Activated B cell treated with CpG ODN at 0.5 μM for 24 hours (primary cell): ENCODE measurements at regions of chr22 and their contacts with region 1.

Region 1: GRCh38 chr22:30289134-30289979 is at the start of gene CASTOR1:
- DNase-seq: peak; percentile 90
- ATAC-seq: peak; percentile 85
- H3K4me3 Mint-ChIP-seq: peak within 1 kb of the TSS; percentile 88
- H3K27ac Mint-ChIP-seq: peak within 1 kb of the TSS; percentile 82
- H3K4me1 Mint-ChIP-seq: peaks cover 38% of the 10 kb centered on the region
- H3K27me3 Mint-ChIP-seq: no peaks in the 10 kb centered on the region
- CTCF ChIP-seq: no peak
- total RNA-seq, gene CASTOR1: 2.4 and 3.5 TPM in 2 replicates

Region 2: DNA sequence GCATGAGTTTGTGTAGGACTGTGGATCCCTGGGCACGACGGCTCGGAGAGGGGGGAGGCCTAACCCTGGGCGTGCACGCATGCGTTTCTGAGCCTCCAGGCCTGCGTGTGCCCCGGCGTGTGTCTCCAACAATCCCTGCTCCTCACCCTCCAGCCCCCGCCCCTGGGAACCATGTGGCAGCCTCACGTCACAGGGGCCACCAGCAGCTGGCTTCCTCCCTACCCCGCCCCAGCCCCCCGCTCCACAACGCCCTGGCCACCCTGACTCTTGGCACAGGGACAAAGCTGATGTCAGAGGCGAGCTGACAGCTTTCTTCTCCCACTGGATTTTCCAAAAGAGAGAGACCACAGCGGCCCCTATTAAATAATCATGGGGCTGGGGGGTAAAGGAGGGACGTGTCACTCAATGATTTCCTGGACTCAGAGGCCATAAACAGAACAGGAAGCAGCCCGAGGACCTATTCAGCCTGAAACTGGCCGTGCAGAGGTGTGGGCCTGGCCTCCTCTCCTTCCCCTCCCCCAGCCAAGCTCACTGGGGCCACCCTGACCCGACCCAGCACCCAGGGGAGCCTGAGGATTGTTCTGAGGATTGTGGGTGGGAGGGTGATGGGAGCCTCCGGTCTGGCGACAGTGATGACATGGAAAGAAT is 36.0 kb before region 1 on chr22:
- CTCF ChIA-PET with region 1: interaction called, 8 read pairs
- POLR2A ChIA-PET with region 1: no interaction called
- intact Hi-C with region 1: loop called (anchors 1 kb)
- DNase-seq: no peak
- ATAC-seq: no peak
- H3K4me3 Mint-ChIP-seq: no peak overlapping the region
- H3K27ac Mint-ChIP-seq: no peak overlapping the region
- H3K4me1 Mint-ChIP-seq: peaks cover 5% of the 10 kb centered on the region
- H3K27me3 Mint-ChIP-seq: peaks cover 17% of the 10 kb centered on the region
- CTCF ChIP-seq: no peak

Region 3: GRCh38 chr22:30305519-30305905 is 16.2 kb after region 1 on chr22:
- CTCF ChIA-PET with region 1: interaction called, 83 read pairs
- POLR2A ChIA-PET with region 1: interaction called, 131 read pairs
- intact Hi-C with region 1: loop called (anchors 1 kb)
- DNase-seq: no peak
- ATAC-seq: peak; percentile 61
- H3K4me3 Mint-ChIP-seq: peak overlapping the region; percentile 21
- H3K27ac Mint-ChIP-seq: peak overlapping the region; percentile 81
- H3K4me1 Mint-ChIP-seq: peaks cover 100% of the 10 kb centered on the region
- H3K27me3 Mint-ChIP-seq: no peaks in the 10 kb centered on the region
- CTCF ChIP-seq: no peak

Region 4: GRCh38 chr22:30326706-30327362 is 37.5 kb after region 1 on chr22 and contains the start of gene TBC1D10A:
- CTCF ChIA-PET with region 1: interaction called, 83 read pairs
- POLR2A ChIA-PET with region 1: interaction called, 92 read pairs
- intact Hi-C with region 1: loop called (anchors 1 kb)
- DNase-seq: peak; percentile 83
- ATAC-seq: peak; percentile 94
- H3K4me3 Mint-ChIP-seq: peak within 1 kb of the TSS; percentile 86
- H3K27ac Mint-ChIP-seq: peak within 1 kb of the TSS; percentile 82
- H3K4me1 Mint-ChIP-seq: peaks cover 45% of the 10 kb centered on the region
- H3K27me3 Mint-ChIP-seq: no peaks in the 10 kb centered on the region
- CTCF ChIP-seq: no peak
- total RNA-seq, gene TBC1D10A: 20.1 and 20.4 TPM in 2 replicates

Region 5: GRCh38 chr22:30356449-30357235 is 67.3 kb after region 1 on chr22 and contains the starts of genes CCDC157 and SF3A1:
- CTCF ChIA-PET with region 1: interaction called, 34 read pairs
- POLR2A ChIA-PET with region 1: interaction called, 68 read pairs
- intact Hi-C with region 1: loop called (anchors 1 kb)
- DNase-seq: peak; percentile 88
- ATAC-seq: peak; percentile 86
- H3K4me3 Mint-ChIP-seq: peak within 1 kb of the TSS; percentile 92
- H3K27ac Mint-ChIP-seq: peak within 1 kb of the TSS; percentile 76
- H3K4me1 Mint-ChIP-seq: peaks cover 43% of the 10 kb centered on the region
- H3K27me3 Mint-ChIP-seq: no peaks in the 10 kb centered on the region
- CTCF ChIP-seq: no peak
- total RNA-seq, gene CCDC157: 1.8 and 2.9 TPM in 2 replicates
- total RNA-seq, gene SF3A1: 263 and 269 TPM in 2 replicates

Region 6: DNA sequence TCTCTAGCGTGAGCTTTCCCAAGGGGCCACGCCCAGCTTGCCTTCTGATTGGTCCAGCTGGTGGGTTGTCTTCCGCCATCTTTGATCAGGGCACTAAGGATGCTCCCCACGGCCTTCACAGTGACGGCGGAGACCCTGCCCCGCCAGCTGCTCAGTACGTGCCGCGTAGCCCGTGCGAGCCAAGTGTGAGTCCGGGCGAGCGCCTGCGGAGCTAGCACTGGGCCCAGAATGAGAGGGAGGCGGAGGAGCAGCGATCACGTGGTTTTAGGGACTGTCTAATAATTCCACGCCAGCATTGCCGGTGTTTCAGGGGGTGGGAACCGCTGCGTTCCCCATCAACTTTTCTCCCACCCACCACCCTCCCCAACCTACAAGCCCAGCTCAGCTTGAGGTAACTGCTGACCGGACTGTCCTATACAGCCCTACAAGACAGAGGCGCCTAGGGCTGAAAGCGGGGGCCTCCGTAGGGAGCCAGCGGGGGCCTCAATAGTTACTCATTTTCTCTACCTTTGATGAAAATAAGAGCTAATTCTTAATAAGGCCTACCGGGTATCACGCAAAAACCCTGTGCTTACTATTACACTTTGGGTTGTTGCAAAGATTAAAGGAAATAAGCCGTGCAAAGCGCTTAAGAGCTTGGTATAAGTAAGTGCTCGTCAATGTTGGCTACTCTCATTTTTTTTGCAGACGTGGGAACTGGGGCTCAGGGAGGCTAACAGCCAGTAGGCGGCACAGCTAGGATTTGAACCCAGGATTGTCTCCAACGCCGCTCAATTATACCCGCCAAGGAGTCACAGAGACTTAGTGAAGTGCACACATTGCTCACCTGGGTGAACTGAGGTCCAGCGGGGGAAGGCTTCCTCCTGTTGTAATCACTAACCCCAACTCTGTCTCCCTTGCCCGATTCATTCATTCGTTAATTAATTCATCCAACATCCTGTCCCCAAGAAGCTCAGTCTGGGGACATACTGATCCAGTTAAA is 134.9 kb after region 1 on chr22:
- CTCF ChIA-PET with region 1: interaction called, 27 read pairs
- POLR2A ChIA-PET with region 1: interaction called, 9 read pairs
- intact Hi-C with region 1: loop called (anchors 1 kb)
- DNase-seq: peak; percentile 89
- ATAC-seq: peak; percentile 88
- H3K4me3 Mint-ChIP-seq: peak overlapping the region; percentile 97
- H3K27ac Mint-ChIP-seq: peak overlapping the region; percentile 96
- H3K4me1 Mint-ChIP-seq: peaks cover 47% of the 10 kb centered on the region
- H3K27me3 Mint-ChIP-seq: no peaks in the 10 kb centered on the region
- CTCF ChIP-seq: no peak